ENCODE measurements at regions of chr2 and their contacts with region 1.

Region 1: GRCh38 chr2:55771612-55772011 is 78.0 kb upstream of the PNPT1 start:
- DNase-seq: peak; percentile 67
- ATAC-seq: peak; percentile 79
- H3K4me3 ChIP-seq: no peak overlapping the region
- H3K27ac ChIP-seq: no peak overlapping the region
- H3K4me1 ChIP-seq: peaks cover 5% of the 10 kb centered on the region
- H3K27me3 ChIP-seq: no peaks in the 10 kb centered on the region
- CTCF ChIP-seq: peak; percentile 91
- POLR2A ChIP-seq: no peak
- RAD21 ChIP-seq: peak; percentile 90

Region 2: DNA sequence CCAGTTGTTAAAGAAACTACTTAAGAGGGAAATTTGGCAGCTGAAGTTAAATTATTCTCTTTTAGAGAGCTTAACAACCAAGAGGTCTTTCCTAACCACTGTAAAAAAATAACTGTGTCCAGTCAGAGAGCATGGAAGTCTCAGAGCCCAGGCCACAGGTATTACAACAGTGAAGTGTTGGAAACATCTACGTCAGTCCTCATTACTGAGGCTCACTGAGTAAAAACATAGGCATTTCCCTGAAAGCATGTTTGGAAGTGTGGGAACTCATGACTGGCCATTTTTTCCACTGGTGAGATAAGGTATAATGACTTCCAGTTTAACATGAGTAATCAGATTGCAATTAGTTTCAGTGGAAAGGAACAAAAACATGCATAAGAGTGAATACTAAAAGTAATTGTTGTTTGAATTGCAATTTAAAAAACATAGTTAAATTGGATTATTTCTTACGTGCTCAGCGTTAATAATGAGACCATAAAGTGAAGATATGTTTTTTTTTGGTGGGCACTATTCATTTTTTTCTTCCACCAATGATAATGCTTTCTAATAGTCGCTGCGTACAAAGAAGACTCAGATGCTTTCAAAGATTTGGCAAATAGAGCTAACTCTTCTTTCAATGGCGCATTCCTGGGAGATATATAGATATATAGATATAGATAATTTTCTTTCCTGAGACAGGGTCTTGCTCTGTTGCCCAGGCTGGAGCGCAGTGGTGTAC is 91.2 kb after region 1 on chr2:
- CTCF ChIA-PET with region 1: no interaction called
- POLR2A ChIA-PET with region 1: no interaction called
- dilution Hi-C with region 1: no loop called
- in situ Hi-C with region 1: no loop called
- intact Hi-C with region 1: loop called (anchors 1 kb)
- DNase-seq: peak; percentile 100
- ATAC-seq: peak; percentile 89
- H3K4me3 ChIP-seq: no peak overlapping the region
- H3K27ac ChIP-seq: peak overlapping the region; percentile 100
- H3K4me1 ChIP-seq: peaks cover 16% of the 10 kb centered on the region
- H3K27me3 ChIP-seq: no peaks in the 10 kb centered on the region
- CTCF ChIP-seq: no peak
- POLR2A ChIP-seq: peak; percentile 8; the same call in 1 of the 2 replicates
- RAD21 ChIP-seq: no peak

Region 3: GRCh38 chr2:55961318-55961911 is 189.8 kb after region 1 on chr2:
- CTCF ChIA-PET with region 1: interaction called, 16 read pairs
- POLR2A ChIA-PET with region 1: no interaction called
- dilution Hi-C with region 1: no loop called
- in situ Hi-C with region 1: no loop called
- intact Hi-C with region 1: loop called (anchors 1 kb)
- DNase-seq: peak; percentile 66
- ATAC-seq: peak; percentile 73
- H3K4me3 ChIP-seq: no peak overlapping the region
- H3K27ac ChIP-seq: no peak overlapping the region
- H3K4me1 ChIP-seq: peaks cover 8% of the 10 kb centered on the region
- H3K27me3 ChIP-seq: no peaks in the 10 kb centered on the region
- CTCF ChIP-seq: peak; percentile 71
- POLR2A ChIP-seq: no peak
- RAD21 ChIP-seq: peak; percentile 74

Region 4: GRCh38 chr2:56009758-56010458 is 238.3 kb after region 1 on chr2:
- CTCF ChIA-PET with region 1: interaction called, 5 read pairs
- POLR2A ChIA-PET with region 1: no interaction called
- dilution Hi-C with region 1: no loop called
- in situ Hi-C with region 1: loop called (anchors 10 kb)
- intact Hi-C with region 1: loop called (anchors 1 kb)
- DNase-seq: peak; percentile 70
- ATAC-seq: no peak
- H3K4me3 ChIP-seq: no peak overlapping the region
- H3K27ac ChIP-seq: no peak overlapping the region
- H3K4me1 ChIP-seq: peaks cover 3% of the 10 kb centered on the region
- H3K27me3 ChIP-seq: no peaks in the 10 kb centered on the region
- CTCF ChIP-seq: peak; percentile 84
- POLR2A ChIP-seq: no peak
- RAD21 ChIP-seq: peak; percentile 85

Region 5: GRCh38 chr2:56132138-56132537 is 360.5 kb after region 1 on chr2:
- CTCF ChIA-PET with region 1: no interaction called
- POLR2A ChIA-PET with region 1: no interaction called
- dilution Hi-C with region 1: no loop called
- in situ Hi-C with region 1: no loop called
- intact Hi-C with region 1: loop called (anchors 5 kb)
- DNase-seq: peak; percentile 47
- ATAC-seq: peak; percentile 51; the same call in 1 of the 2 replicates
- H3K4me3 ChIP-seq: no peak overlapping the region
- H3K27ac ChIP-seq: no peak overlapping the region
- H3K4me1 ChIP-seq: no peaks in the 10 kb centered on the region
- H3K27me3 ChIP-seq: 0 out of 2 replicates have a peak, but pooled peaks cover 2% of the 10 kb centered on the region
- CTCF ChIP-seq: peak; percentile 69
- POLR2A ChIP-seq: no peak
- RAD21 ChIP-seq: peak; percentile 66

Measured in IMR-90 (cell line).